ENCODE measurements at regions of chr1 and their contacts with region 1.

Region 1: DNA sequence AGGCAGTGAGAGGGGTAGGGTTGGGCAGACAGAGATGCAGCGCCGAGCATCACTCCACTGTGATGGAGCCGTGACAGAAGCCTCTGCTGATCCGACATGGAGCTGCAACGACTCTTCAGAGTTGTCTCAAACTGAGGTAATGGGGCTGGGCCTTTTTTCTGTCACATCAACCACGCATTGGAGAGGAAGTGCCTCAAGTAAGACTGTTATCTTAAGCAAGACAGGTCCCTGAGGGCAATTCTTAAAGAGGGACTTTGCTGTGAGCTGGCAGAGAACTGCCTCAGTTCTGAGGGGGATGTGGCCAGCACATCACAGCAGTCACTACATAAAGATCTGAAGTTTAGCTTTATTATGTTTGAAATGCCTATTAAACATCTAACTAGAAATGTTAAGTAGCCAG is 54.4 kb upstream of the BCL9 start:
- DNase-seq: no peak
- H3K4me3 ChIP-seq: no peak overlapping the region
- H3K27ac ChIP-seq: no peak overlapping the region
- H3K4me1 ChIP-seq: no peaks in the 10 kb centered on the region
- H3K27me3 ChIP-seq: no peaks in the 10 kb centered on the region
- CTCF ChIP-seq: no peak

Region 2: GRCh38 chr1:147351140-147351835 is 135.6 kb before region 1 on chr1:
- intact Hi-C with region 1: no loop called
- DNase-seq: no peak
- H3K4me3 ChIP-seq: no peak overlapping the region
- H3K27ac ChIP-seq: no peak overlapping the region
- H3K4me1 ChIP-seq: no peaks in the 10 kb centered on the region
- H3K27me3 ChIP-seq: no peaks in the 10 kb centered on the region
- CTCF ChIP-seq: no peak

Region 3: GRCh38 chr1:147463022-147463421 is 23.8 kb before region 1 on chr1:
- intact Hi-C with region 1: no loop called
- DNase-seq: no peak
- H3K4me3 ChIP-seq: no peak overlapping the region
- H3K27ac ChIP-seq: no peak overlapping the region
- H3K4me1 ChIP-seq: no peaks in the 10 kb centered on the region
- H3K27me3 ChIP-seq: no peaks in the 10 kb centered on the region
- CTCF ChIP-seq: no peak

Region 4: DNA sequence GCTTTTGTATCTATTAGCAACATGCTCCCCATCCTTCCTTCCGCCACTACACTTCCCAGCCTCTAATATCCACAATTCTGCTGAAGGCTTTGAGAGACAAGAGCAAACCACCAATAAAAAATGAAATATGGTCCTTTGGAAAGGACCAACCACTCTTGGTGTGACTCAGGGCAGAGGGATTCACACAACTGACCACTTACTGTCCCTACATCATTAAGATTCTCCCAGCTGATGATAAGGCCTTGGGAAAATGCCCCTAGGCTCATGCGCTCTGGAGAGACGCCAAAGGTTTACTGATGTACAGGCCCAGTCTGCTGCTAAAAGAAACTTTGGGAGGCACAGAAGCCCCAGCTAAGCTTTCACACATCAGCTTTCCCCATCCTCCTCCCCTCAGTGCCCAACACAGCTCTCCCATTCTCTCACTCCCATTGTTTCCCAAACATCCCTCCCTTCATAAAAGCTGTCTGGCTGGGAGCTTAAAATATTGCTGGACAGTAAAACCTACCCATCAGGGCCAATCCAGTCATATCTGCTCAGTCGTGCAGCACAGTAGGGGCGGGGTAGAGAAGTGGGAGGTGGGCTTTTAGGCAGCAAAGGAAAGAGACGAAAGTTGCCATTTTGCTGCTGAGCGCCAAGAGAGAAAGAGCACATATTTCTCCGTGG is 415.5 kb after region 1 on chr1 and contains the start of gene GJA8:
- intact Hi-C with region 1: loop called (anchors 5 kb)
- DNase-seq: no peak
- H3K4me3 ChIP-seq: no peak within 1 kb of the TSS
- H3K27ac ChIP-seq: no peak within 1 kb of the TSS
- H3K4me1 ChIP-seq: no peaks in the 10 kb centered on the region
- H3K27me3 ChIP-seq: no peaks in the 10 kb centered on the region
- CTCF ChIP-seq: no peak
- total RNA-seq, gene GJA8: not detected

Measured in ascending aorta (tissue), 2 donors.